MCF 10A (cell line): ENCODE measurements at regions of chr3 and their contacts with region 1.

Region 1: GRCh38 chr3:9396700-9397521 is 504 bp upstream of the SETD5 start:
- DNase-seq: peak; percentile 99
- H3K4me3 Mint-ChIP-seq: peak overlapping the region; percentile 81
- H3K27ac Mint-ChIP-seq: peak overlapping the region; percentile 92
- H3K4me1 Mint-ChIP-seq: peaks cover 40% of the 10 kb centered on the region
- H3K27me3 Mint-ChIP-seq: no peaks in the 10 kb centered on the region
- CTCF ChIP-seq: no peak

Region 2: DNA sequence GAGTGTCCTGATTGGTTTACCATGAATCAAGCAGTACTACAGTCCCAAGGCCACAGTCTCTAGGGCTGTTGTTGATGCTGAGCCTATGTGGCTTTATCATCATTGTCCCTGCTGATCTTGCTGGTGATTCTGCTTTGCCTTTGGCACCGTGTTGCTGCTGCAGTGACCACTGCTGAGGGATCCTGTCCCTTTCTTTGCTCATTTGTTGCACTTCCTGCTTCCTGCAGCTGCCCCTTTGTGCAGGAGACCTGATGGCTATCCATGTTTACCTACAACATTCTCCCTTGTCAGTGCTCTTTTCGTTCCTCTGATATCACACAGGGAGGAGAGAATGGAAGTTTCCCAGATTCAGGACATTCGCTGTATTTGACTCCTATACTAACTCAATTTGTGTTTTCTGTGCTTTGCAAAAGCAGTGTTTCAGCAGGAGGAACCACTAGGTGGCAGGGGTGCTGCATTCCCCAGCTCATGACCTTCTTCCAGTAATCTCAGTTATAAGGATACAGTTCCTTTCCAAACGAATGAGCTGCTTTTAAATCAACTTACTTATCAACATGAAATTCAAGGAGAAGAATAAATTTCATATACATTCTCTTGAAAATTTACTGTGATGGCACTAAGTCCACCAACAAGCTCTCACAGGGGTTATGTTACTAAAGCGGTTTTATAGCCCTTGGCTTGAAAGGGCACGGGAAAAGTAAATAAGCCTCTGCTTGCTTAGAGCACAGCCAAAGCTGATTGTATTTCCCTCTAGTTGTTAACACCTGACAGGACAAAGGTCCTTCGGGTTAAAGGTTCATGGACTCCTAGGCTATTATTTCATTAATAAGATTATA is 43.8 kb before region 1 on chr3:
- CTCF ChIA-PET with region 1: interaction called, 5 read pairs
- POLR2A ChIA-PET with region 1: interaction called, 17 read pairs
- intact Hi-C with region 1: no loop called
- DNase-seq: peak; percentile 67
- H3K4me3 Mint-ChIP-seq: no peak overlapping the region
- H3K27ac Mint-ChIP-seq: no peak overlapping the region
- H3K4me1 Mint-ChIP-seq: peaks cover 24% of the 10 kb centered on the region
- H3K27me3 Mint-ChIP-seq: no peaks in the 10 kb centered on the region
- CTCF ChIP-seq: peak; percentile 90

Region 3: GRCh38 chr3:9384141-9384853 is 12.6 kb before region 1 on chr3:
- CTCF ChIA-PET with region 1: interaction called, 10 read pairs
- POLR2A ChIA-PET with region 1: interaction called, 50 read pairs
- intact Hi-C with region 1: no loop called
- DNase-seq: no peak
- H3K4me3 Mint-ChIP-seq: no peak overlapping the region
- H3K27ac Mint-ChIP-seq: peak overlapping the region; percentile 73
- H3K4me1 Mint-ChIP-seq: no peaks in the 10 kb centered on the region
- H3K27me3 Mint-ChIP-seq: no peaks in the 10 kb centered on the region
- CTCF ChIP-seq: no peak

Region 4: DNA sequence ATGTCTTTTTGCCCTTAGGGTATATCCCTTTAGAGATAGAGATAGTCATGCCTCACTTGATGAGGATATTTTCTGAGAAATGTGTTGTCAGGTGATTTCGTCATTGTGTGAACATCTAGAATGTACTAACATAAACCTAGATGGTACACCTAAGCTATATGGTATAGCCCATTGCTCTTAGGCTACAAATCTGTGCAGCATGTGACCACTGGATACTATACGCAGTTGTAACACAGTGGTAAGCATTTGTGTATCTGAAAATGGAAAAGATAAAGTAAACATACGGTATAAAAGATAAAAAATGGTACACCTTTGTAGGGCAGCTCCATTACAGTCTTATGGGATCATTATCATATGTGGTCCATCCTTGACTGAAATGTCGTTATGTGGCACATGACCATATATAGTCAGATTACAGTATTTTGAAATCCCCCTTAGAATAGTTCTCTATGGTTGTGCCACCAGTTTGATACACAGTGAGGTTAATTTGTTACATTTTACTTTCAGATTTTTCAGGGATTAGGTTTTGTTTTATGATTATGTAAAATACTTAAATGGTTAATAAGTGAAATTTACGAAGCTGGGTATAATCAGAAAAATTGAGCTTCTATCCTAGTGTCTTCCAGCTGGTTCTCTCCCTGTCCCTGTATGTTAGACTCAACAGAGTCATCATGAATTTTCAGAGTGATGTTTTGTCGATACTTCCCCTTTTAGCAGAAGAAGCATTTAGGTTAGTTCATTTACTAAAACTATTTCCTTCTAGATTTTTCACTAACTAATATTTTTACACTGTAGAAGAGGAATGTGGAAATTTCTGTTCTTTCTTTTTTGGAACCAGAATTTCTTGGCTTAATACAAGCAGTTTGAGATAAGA is 13.3 kb after region 1 on chr3:
- CTCF ChIA-PET with region 1: interaction called, 7 read pairs
- POLR2A ChIA-PET with region 1: interaction called, 452 read pairs
- intact Hi-C with region 1: no loop called
- DNase-seq: no peak
- H3K4me3 Mint-ChIP-seq: no peak overlapping the region
- H3K27ac Mint-ChIP-seq: no peak overlapping the region
- H3K4me1 Mint-ChIP-seq: peaks cover 22% of the 10 kb centered on the region
- H3K27me3 Mint-ChIP-seq: no peaks in the 10 kb centered on the region
- CTCF ChIP-seq: no peak

Region 5: DNA sequence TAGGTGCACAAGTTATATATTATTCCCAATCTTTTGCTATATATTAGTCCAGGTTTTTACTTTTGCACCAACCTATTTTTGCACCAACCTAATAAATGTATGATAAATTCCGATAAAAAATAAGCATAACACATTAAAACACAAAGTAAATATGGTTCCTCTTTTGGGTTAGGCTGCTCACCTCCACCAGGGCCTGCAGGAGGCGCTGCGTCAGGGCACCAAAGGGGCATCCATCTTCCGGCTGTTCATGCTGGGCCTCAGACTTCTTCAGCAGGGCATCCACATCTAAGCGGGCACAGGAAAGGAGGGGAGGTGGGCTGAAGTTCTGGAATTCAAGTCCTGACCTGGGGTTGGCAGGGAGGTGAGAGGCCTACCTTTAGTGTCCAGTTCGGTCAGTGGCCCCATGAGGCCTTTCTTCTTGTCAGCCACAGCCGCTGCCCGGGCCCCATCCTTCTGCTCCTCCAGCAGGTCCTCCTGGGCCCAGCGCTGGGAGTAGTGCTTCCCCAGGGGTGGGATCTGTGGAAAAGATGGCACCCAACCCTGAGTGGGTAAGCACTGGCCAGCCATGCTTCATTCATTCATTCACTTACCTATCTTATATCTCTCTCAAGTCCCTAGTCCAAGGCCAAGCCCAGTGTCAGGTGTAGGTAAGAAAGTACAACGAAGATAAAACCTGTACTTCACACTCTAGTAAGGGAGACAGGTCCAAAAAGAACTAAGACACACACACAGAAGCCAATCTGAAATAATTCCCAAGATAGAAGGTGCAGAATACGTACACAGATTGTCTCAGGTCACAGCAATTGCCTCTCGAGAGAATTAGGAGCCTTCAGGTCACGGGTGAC is 390.1 kb after region 1 on chr3:
- CTCF ChIA-PET with region 1: no interaction called
- POLR2A ChIA-PET with region 1: no interaction called
- intact Hi-C with region 1: no loop called
- DNase-seq: no peak
- H3K4me3 Mint-ChIP-seq: no peak overlapping the region
- H3K27ac Mint-ChIP-seq: no peak overlapping the region
- H3K4me1 Mint-ChIP-seq: peaks cover 13% of the 10 kb centered on the region
- H3K27me3 Mint-ChIP-seq: no peaks in the 10 kb centered on the region
- CTCF ChIP-seq: peak; percentile 53